ENCODE measurements at regions of chr6 and their contacts with region 1.

Region 1: DNA sequence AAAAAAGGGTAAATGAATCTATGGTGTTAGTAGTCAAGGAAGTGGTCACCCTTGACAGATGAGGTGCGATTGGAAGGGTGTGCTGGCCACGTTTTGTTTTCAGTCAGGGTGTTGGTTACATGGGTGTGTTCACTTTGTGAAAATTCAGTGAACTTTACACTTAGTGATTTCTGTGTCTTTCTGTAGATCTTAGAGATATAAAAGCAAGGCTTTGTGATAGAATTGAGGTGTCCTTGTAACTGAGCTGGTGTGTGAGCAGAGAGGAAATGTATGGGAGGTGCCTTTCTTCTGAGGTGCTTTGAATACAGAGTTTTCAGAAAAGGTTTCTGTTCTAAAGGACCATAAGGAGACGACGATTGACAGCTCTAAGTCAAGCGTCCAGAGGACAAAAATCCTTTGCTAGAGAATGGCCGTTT is 90.5 kb downstream of the SAMD3 start:
- DNase-seq: peak in 8 of 9 donors; percentile 32 to 92 (median 84)
- ATAC-seq: peak; percentile 92
- H3K4me3 ChIP-seq: peak overlapping the region; percentile 21
- H3K4me3 Mint-ChIP-seq: peak overlapping the region; percentile 51 to 81 (median 70)
- H3K27ac ChIP-seq: peak overlapping the region; percentile 71
- H3K27ac Mint-ChIP-seq: peak overlapping the region; percentile 85 to 98 (median 93)
- H3K4me1 ChIP-seq: peaks cover 43 to 61% of the 10 kb centered on the region in 2 donors
- H3K4me1 Mint-ChIP-seq: peaks cover 59 to 100% (median 93%) of the 10 kb centered on the region in 7 donors
- H3K27me3 ChIP-seq: no peaks in the 10 kb centered on the region
- H3K27me3 Mint-ChIP-seq: no peaks in the 10 kb centered on the region

Region 2: GRCh38 chr6:129748212-129748900 is 383.9 kb before region 1 on chr6:
- CTCF ChIA-PET with region 1: no interaction called
- POLR2A ChIA-PET with region 1: interaction called, 3 read pairs
- intact Hi-C with region 1: loop called in 1 of 2 experiments (anchors 10 kb)
- DNase-seq: peak in 8 of 9 donors; percentile 35 to 61 (median 42)
- ATAC-seq: peak; percentile 85
- H3K4me3 ChIP-seq: peak overlapping the region; percentile 43
- H3K4me3 Mint-ChIP-seq: peak overlapping the region; percentile 31 to 86 (median 79)
- H3K27ac ChIP-seq: peak overlapping the region; percentile 69
- H3K27ac Mint-ChIP-seq: peak overlapping the region; percentile 82 to 97 (median 89)
- H3K4me1 ChIP-seq: peaks cover 44 to 49% of the 10 kb centered on the region in 2 donors
- H3K4me1 Mint-ChIP-seq: peaks cover 40 to 81% (median 71%) of the 10 kb centered on the region in 7 donors
- H3K27me3 ChIP-seq: no peaks in the 10 kb centered on the region
- H3K27me3 Mint-ChIP-seq: no peaks in the 10 kb centered on the region

Region 3: DNA sequence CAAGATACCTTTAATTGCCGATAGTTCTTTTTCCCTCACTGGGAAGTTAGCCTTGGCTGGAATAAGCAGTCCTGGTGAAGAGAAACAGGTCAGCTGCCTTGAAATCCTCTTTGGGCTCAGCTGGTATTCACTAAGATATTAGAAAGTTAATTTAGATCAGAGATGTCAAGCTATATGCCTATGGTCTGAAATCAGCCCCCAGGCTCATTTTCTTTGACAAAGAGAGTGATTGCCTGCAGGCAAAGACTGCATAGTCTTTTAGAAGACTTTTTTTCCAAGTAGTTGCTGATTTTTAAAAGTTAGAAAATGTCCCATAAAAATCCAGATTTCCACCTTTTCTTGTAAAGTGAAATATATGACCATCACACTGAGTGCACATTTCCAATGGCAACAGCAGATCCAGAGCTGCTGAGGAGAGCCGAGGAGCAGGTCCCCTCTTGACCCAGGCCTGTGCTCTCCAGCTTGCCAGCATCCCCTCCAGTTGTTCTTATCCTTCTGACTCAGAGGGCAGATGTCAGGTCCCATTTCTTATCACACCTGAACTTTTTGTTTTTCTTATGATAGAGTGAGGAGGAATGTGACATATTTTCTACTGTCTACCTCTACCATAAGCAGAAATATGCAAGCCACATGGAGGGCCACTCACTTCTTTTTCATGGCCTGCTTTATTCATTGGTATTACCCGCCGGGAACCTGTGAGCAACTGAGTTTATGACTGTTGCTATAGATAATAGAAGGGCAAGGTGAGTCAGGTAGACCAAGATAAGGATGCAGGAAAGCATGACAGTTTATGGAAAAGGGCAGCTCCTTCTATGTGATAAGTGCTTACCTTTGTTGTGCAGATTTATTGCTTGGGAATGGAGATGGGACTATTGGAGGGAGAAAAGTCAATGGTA is 131.5 kb before region 1 on chr6:
- CTCF ChIA-PET with region 1: no interaction called
- POLR2A ChIA-PET with region 1: no interaction called
- intact Hi-C with region 1: no loop called
- DNase-seq: no peak
- ATAC-seq: no peak
- H3K4me3 ChIP-seq: no peak overlapping the region
- H3K4me3 Mint-ChIP-seq: no peak overlapping the region
- H3K27ac ChIP-seq: no peak overlapping the region
- H3K27ac Mint-ChIP-seq: peak overlapping the region in 1 of 9 donors; percentile 22
- H3K4me1 ChIP-seq: no peaks in the 10 kb centered on the region
- H3K4me1 Mint-ChIP-seq: no peaks in the 10 kb centered on the region
- H3K27me3 ChIP-seq: no peaks in the 10 kb centered on the region
- H3K27me3 Mint-ChIP-seq: peaks cover 0 to 35% (median 0%) of the 10 kb centered on the region in 5 donors

Region 4: GRCh38 chr6:130120731-130121130 is 11.6 kb before region 1 on chr6:
- CTCF ChIA-PET with region 1: no interaction called
- POLR2A ChIA-PET with region 1: interaction called, 3 read pairs
- intact Hi-C with region 1: loop called in 1 of 2 experiments (anchors 1 kb)
- DNase-seq: peak in 2 of 9 donors; percentile 29 to 34
- ATAC-seq: no peak
- H3K4me3 ChIP-seq: no peak overlapping the region
- H3K4me3 Mint-ChIP-seq: peak overlapping the region in 1 of 10 donors; percentile 10
- H3K27ac ChIP-seq: no peak overlapping the region
- H3K27ac Mint-ChIP-seq: peak overlapping the region in 8 of 9 donors; percentile 11 to 85 (median 56)
- H3K4me1 ChIP-seq: no peaks in the 10 kb centered on the region
- H3K4me1 Mint-ChIP-seq: peaks cover 5 to 48% (median 31%) of the 10 kb centered on the region in 7 donors
- H3K27me3 ChIP-seq: no peaks in the 10 kb centered on the region
- H3K27me3 Mint-ChIP-seq: no peaks in the 10 kb centered on the region

Region 5: GRCh38 chr6:130215526-130215925 is 83.2 kb after region 1 on chr6:
- CTCF ChIA-PET with region 1: no interaction called
- POLR2A ChIA-PET with region 1: interaction called, 3 read pairs
- intact Hi-C with region 1: loop called in 1 of 2 experiments (anchors 2 kb)
- DNase-seq: peak in 8 of 9 donors; percentile 31 to 79 (median 70)
- ATAC-seq: peak; percentile 96
- H3K4me3 ChIP-seq: peak overlapping the region; percentile 63
- H3K4me3 Mint-ChIP-seq: peak overlapping the region; percentile 74 to 98 (median 90)
- H3K27ac ChIP-seq: peak overlapping the region; percentile 54
- H3K27ac Mint-ChIP-seq: peak overlapping the region; percentile 82 to 92 (median 86)
- H3K4me1 ChIP-seq: peaks cover 29 to 35% of the 10 kb centered on the region in 2 donors
- H3K4me1 Mint-ChIP-seq: peaks cover 21 to 81% (median 69%) of the 10 kb centered on the region in 7 donors
- H3K27me3 ChIP-seq: no peaks in the 10 kb centered on the region
- H3K27me3 Mint-ChIP-seq: no peaks in the 10 kb centered on the region

Region 6: GRCh38 chr6:130381459-130382380 is 249.4 kb after region 1 on chr6:
- CTCF ChIA-PET with region 1: no interaction called
- POLR2A ChIA-PET with region 1: no interaction called
- intact Hi-C with region 1: loop called in 1 of 2 experiments (anchors 5 kb)
- DNase-seq: peak in 7 of 9 donors; percentile 19 to 67 (median 48)
- ATAC-seq: peak; percentile 93
- H3K4me3 ChIP-seq: no peak overlapping the region
- H3K4me3 Mint-ChIP-seq: peak overlapping the region in 5 of 10 donors; percentile 0 to 46 (median 11)
- H3K27ac ChIP-seq: no peak overlapping the region
- H3K27ac Mint-ChIP-seq: peak overlapping the region in 1 of 9 donors; percentile 53
- H3K4me1 ChIP-seq: peaks cover 11 to 14% of the 10 kb centered on the region in 2 donors
- H3K4me1 Mint-ChIP-seq: peaks cover 14 to 27% (median 17%) of the 10 kb centered on the region in 7 donors
- H3K27me3 ChIP-seq: no peaks in the 10 kb centered on the region
- H3K27me3 Mint-ChIP-seq: peaks cover 0 to 16% (median 0%) of the 10 kb centered on the region in 5 donors

Region 7: GRCh38 chr6:130843575-130844320 is 711.5 kb after region 1 on chr6:
- CTCF ChIA-PET with region 1: no interaction called
- POLR2A ChIA-PET with region 1: no interaction called
- intact Hi-C with region 1: loop called in 1 of 2 experiments (anchors 1 kb)
- DNase-seq: peak in 7 of 9 donors; percentile 30 to 74 (median 52)
- ATAC-seq: peak; percentile 90
- H3K4me3 ChIP-seq: no peak overlapping the region
- H3K4me3 Mint-ChIP-seq: no peak overlapping the region
- H3K27ac ChIP-seq: no peak overlapping the region
- H3K27ac Mint-ChIP-seq: peak overlapping the region in 1 of 9 donors; percentile 51
- H3K4me1 ChIP-seq: no peaks in the 10 kb centered on the region
- H3K4me1 Mint-ChIP-seq: peaks cover 0 to 7% (median 0%) of the 10 kb centered on the region in 7 donors
- H3K27me3 ChIP-seq: no peaks in the 10 kb centered on the region
- H3K27me3 Mint-ChIP-seq: no peaks in the 10 kb centered on the region

Measured in naive thymus-derived CD4-positive, alpha-beta T cell (primary cell).